ENCODE measurements at regions of chr12 and their contacts with region 1.

Region 1: DNA sequence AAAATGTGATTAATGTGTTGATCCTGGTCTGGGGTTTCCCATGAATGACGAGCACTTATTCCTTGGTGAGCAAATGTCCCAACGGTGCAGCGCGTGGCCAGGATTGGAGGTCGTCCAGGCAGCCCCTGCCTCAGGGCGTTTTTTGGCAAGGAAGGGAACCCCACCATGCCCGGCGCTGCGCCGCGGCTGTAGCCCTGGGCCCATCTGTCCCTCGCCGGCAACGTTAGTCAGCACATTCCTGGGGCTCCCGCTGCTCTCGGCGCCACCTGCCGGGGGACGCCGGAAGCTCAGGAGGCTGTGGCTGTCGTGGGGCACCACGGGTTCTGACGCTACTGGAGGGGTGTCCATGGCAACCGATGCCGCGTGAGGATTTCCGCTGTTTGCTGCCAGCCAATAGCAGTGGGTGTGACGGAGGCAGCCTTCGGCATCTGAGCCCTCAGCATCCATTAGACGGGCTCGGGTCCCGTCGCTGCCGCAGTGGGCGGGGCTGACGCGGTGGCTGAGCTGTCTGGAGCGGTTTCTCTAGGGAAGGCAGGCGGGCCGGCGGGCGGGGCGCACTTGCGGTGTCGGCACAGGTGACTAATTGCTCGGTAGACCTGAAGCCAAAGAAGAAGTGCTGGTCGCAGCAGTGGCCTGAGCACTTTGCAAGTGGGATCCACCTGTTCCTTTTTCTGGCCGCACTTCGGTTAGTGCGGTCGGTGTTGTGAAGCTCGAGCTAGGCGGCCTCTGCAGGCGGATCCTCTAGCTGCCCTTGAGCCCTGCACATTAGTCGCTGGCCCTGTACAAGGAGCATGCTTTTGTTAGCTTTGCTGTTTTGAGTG is 29.5 kb downstream of the RAB35 start:
- ATAC-seq: peak; percentile 90 to 98 (median 96)
- H3K4me3 ChIP-seq: peak overlapping the region; percentile 29 to 39 (median 33)
- H3K27ac ChIP-seq: peak overlapping the region; percentile 52 to 55
- H3K4me1 ChIP-seq: peaks cover 17 to 18% of the 10 kb centered on the region in 2 donors

Region 2: DNA sequence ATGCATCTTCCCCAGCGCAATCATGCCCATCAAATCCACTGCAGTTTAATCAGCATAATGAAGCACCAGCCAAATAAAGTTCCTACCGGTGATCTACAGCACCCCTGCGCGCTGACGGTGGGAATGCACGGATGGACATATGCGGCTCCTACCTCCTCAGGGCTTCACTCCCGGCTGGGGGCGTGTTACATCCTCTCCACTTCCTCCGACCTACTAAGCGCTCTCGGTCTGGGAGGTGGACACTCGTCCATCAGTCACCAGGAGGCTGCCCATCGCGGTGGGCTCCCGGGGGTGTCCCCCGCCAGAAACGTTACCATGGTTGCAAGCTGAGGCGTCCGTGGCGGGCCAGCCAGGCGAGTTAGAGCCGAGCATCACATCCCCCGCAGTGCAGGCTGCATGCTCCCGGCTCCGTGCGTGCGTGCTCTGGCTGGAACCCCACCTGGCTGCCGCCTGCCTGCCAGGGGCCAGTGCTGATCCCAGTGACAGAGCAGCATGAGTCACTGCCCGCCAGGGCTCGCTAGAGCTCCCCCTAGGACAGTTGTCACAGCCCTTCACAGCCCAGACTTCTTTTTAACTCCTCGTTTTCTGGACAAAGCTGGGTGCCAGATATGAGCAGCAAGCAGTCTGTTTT is 282.9 kb before region 1 on chr12:
- in situ Hi-C with region 1: loop called in 1 of 9 experiments (anchors 25 kb)
- ATAC-seq: peak; percentile 93 to 100 (median 98)
- H3K4me3 ChIP-seq: peak overlapping the region in 4 of 5 donors; percentile 28 to 35 (median 32)
- H3K27ac ChIP-seq: no peak overlapping the region
- H3K4me1 ChIP-seq: peaks cover 8 to 14% of the 10 kb centered on the region in 2 donors

Region 3: DNA sequence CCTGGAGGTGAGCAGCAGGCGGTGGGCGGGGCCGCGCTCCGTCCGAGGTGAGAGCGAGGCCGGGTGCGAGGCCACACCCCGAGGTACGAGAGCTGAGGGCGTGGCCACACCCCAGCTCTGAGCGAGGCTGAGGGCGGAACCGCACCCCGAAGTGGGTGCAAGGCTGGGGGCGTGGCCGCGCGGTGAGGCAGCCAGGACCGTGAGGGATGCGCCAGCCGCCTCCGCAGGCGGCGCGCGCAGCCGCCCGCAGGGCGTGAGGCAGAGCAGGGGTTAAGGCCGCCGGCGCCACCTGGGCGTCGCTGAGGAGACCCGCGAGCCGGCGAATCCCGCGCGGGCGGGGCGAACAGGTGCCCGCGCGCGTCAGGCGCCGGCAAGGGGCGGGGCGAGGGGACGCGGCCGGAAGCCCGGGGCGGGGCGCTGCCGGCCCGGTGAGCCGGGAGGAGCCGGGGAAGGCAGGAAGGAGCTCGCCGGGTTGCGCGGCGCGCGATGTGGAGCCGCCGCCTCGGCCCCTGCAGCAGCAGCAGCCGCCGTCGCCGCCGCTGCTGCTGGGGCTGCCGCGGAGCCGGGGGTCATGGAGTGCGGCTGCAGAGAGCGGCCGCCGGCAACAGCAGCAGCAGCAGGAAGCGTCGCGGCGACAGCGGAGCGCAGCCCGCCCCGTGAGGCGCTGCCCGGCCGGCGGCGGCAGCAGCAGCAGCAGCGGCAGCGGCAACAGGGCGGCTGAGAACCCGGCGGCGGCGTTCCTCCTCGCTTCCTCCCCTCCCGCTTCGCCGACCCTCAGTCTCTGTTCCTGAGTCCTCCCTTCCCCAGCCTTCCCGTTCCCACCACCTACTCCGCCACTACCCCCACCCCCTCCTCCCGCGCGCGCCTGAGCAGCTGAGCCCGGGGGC is 98.0 kb before region 1 on chr12 and contains the start of gene BICDL1:
- in situ Hi-C with region 1: loop called in 1 of 9 experiments (anchors 25 kb)
- ATAC-seq: peak; percentile 63 to 86 (median 82)
- H3K4me3 ChIP-seq: peak within 1 kb of the TSS; percentile 53 to 97 (median 80)
- H3K27ac ChIP-seq: peak within 1 kb of the TSS; percentile 90 to 92
- H3K4me1 ChIP-seq: peaks cover 7 to 13% of the 10 kb centered on the region in 2 donors
- total RNA-seq, gene BICDL1: 1.6 to 31.3 (median 13.4) TPM